Mammary epithelial cell (primary cell): ENCODE measurements at regions of chr9 and their contacts with region 1.

Region 1: DNA sequence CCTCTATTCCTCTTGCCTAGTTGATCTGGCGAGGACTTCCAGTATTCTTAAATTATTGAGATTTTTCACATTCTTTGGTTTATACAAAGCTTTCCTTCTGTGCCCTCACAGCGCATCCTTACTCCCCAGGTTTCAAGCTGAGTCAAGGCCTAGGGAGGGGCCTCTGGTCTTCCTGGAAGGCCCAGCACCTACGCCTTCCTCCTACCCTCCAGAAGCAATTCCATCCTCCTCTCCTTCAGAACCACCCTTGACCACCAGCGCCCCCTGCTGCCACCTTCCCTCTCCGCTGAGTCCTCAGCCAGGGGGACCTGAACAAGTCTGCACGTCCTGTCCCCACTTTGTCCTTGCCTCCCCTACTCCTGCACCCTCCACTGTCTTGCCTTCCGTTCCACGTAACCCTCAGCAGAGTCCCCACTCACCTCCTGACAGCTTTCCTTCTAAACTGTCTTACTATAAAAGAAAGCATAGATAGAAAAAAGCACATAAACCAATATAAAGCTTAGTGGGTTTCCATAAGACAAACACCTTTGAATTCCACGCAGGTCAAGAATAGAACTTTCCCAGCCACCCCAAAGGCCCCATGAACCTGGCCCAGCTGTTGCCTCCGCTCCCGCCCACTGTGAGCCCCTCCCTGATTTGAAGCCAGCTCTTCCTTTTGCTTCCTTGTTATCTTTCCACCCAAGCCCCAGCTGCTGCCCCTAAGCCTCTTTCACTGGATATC is 63.0 kb upstream of the CTSL start:
- DNase-seq: peak; percentile 78
- H3K4me3 ChIP-seq: no peak overlapping the region
- H3K27ac ChIP-seq: no peak overlapping the region
- H3K4me1 ChIP-seq: no peaks in the 10 kb centered on the region
- H3K27me3 ChIP-seq: no peaks in the 10 kb centered on the region
- CTCF ChIP-seq: peak; percentile 84 to 92

Region 2: DNA sequence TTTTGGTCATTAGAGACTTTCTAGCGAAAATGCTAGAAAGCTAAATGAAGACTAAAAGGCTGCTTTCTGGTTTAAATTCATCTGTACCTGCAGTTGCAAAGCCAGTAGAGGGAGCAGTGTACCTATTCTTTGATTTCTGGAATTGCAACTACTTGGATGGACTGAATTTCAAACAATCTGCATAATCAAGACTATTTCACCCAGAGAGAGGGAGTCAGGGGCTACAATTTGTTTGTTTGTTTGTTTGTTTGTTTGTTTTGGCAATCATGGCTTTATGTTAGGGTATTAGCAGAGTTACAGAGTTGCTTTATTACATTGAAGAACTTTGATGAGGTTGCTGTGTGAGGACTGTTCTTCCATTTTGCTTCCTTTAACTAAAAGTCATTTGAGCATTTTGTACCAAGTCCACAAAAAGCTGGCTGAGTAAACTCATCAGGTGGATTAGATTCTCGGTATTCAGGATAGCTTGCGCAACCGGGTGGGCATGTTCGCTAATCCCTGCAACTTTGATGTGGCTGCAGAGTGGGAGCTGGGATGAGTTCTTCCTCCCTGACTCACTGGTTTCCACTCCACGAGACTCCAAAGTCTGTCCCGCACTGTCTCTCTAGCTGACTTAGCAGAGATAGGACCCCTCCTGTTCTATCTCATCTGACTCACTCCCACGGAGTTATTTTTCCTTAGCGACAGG is 1228.8 kb before region 1 on chr9:
- CTCF ChIA-PET with region 1: no interaction called
- dilution Hi-C with region 1: no loop called
- in situ Hi-C with region 1: loop called in 1 of 2 experiments (anchors 25 kb)
- intact Hi-C with region 1: loop called (anchors 5 kb)
- DNase-seq: peak; percentile 35
- H3K4me3 ChIP-seq: no peak overlapping the region
- H3K27ac ChIP-seq: no peak overlapping the region
- H3K4me1 ChIP-seq: peaks cover 8% of the 10 kb centered on the region
- H3K27me3 ChIP-seq: no peaks in the 10 kb centered on the region
- CTCF ChIP-seq: peak; percentile 82 to 84

Region 3: DNA sequence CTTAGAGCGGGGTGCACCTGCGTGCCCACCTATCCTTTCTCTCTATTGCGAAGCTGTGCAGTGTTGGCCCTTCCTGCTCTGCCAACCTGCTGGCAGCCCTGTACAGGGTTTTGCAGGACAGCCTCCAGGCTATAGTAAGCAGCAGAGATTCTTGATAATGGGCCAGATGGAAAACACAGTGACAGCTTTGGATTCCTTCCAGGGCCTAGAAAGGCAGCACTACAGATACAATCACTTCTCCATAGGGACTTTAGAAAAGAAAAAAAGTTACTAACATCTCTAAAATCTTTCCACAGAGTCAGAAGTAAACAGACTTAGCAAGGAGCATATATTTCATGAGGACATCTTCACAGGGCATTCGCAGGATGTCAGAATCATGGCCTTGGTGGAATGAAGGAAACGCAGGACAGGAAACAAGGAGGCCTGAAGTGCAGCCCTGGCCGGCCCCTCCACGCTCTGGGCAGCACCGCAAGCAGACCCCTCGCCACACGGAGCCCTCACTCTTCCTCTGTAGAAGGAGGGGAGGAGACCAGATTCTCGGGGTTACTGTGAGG is 543.6 kb before region 1 on chr9:
- CTCF ChIA-PET with region 1: no interaction called
- dilution Hi-C with region 1: no loop called
- in situ Hi-C with region 1: loop called in 1 of 2 experiments (anchors 25 kb)
- intact Hi-C with region 1: no loop called
- DNase-seq: peak; percentile 61
- H3K4me3 ChIP-seq: no peak overlapping the region
- H3K27ac ChIP-seq: no peak overlapping the region
- H3K4me1 ChIP-seq: peaks cover 26% of the 10 kb centered on the region
- H3K27me3 ChIP-seq: no peaks in the 10 kb centered on the region
- CTCF ChIP-seq: no peak

Region 4: DNA sequence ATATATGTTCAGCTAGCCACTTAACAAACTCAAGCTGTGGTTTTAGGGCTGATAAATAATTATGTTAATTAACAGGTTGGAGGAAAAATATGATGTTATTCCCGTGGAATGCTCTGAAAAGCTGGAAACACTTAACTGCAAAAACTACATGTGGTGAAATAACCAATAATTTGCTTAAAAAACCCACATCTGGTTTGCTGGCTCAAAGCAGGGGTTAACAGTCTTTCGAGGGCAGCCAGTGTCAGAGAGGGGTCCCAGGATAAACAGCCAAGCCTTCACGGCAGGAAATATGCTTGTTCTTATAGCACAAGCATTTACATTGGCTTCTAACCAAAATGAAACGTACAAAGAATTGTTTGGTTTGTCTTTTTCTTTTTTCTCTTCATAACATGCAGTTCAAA is 461.6 kb before region 1 on chr9:
- CTCF ChIA-PET with region 1: no interaction called
- dilution Hi-C with region 1: no loop called
- in situ Hi-C with region 1: no loop called
- intact Hi-C with region 1: no loop called
- DNase-seq: no peak
- H3K4me3 ChIP-seq: no peak overlapping the region
- H3K27ac ChIP-seq: no peak overlapping the region
- H3K4me1 ChIP-seq: peaks cover 16% of the 10 kb centered on the region
- H3K27me3 ChIP-seq: no peaks in the 10 kb centered on the region
- CTCF ChIP-seq: no peak

Region 5: DNA sequence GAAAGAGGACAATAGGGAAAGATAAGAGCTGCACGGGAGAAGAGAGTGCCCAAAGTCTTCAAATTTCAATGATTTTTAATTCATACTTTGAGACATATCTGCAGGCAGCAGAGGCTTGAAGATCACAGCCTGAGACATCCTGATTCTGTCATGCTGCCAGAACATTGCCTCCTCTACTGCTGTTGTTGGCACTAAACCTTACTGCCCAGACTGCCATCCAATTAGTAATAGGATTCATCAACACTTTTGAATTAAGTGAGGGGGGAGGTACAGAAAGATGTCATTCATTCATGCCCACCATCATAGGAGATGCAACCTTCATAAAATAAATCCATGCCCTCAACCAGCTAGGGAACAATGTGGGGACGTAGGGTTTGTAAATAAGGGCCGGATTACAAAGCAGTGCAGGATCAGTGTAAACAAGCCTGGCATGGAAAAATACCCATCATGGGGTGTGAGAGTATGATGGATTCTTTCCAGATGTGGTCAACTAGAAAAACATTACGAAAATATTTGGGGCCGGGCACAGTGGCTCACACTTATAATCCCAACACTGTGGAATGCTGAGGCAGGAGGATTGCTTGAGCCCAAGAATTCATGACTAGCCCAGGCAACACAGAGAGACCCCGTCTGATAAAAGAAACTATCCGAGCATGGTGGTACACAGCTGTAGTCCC is 287.4 kb before region 1 on chr9:
- CTCF ChIA-PET with region 1: interaction called, 5 read pairs
- dilution Hi-C with region 1: no loop called
- in situ Hi-C with region 1: no loop called
- intact Hi-C with region 1: loop called (anchors 1 kb)
- DNase-seq: peak; percentile 84
- H3K4me3 ChIP-seq: no peak overlapping the region
- H3K27ac ChIP-seq: peak overlapping the region; percentile 62
- H3K4me1 ChIP-seq: peaks cover 32% of the 10 kb centered on the region
- H3K27me3 ChIP-seq: no peaks in the 10 kb centered on the region
- CTCF ChIP-seq: no peak

Region 6: DNA sequence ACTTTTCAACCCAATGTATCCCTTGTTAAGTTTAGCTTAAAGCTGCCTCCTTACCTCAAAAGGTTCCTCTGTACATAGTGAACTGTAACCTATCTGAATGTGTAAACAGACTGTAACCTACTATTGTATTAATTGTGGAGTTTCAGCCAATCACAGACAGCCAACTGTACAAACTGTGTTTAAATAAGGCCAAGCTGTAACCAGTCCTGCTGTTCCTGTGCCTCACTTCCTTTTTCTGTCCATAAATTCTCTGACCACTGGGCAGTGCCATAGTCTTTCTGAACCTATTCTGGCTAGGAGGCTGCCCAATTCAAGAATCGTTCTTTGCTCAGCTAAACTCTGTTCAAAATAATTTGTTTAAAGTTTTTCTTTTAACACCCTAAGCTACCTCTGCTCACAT is 240.0 kb before region 1 on chr9:
- CTCF ChIA-PET with region 1: interaction called, 3 read pairs
- dilution Hi-C with region 1: no loop called
- in situ Hi-C with region 1: no loop called
- intact Hi-C with region 1: loop called (anchors 2 kb)
- DNase-seq: no peak
- H3K4me3 ChIP-seq: no peak overlapping the region
- H3K27ac ChIP-seq: no peak overlapping the region
- H3K4me1 ChIP-seq: peaks cover 7% of the 10 kb centered on the region
- H3K27me3 ChIP-seq: no peaks in the 10 kb centered on the region
- CTCF ChIP-seq: no peak

Region 7: DNA sequence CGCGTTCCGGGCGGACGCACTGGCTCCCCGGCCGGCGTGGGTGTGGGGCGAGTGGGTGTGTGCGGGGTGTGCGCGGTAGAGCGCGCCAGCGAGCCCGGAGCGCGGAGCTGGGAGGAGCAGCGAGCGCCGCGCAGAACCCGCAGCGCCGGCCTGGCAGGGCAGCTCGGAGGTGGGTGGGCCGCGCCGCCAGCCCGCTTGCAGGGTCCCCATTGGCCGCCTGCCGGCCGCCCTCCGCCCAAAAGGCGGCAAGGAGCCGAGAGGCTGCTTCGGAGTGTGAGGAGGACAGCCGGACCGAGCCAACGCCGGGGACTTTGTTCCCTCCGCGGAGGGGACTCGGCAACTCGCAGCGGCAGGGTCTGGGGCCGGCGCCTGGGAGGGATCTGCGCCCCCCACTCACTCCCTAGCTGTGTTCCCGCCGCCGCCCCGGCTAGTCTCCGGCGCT is 165.3 kb before region 1 on chr9 and contains the start of gene DAPK1:
- CTCF ChIA-PET with region 1: no interaction called
- dilution Hi-C with region 1: no loop called
- in situ Hi-C with region 1: no loop called
- intact Hi-C with region 1: loop called (anchors 1 kb)
- DNase-seq: peak; percentile 44
- H3K4me3 ChIP-seq: peak within 1 kb of the TSS; percentile 57 to 77 (median 69)
- H3K27ac ChIP-seq: no peak within 1 kb of the TSS
- H3K4me1 ChIP-seq: peaks cover 18% of the 10 kb centered on the region
- H3K27me3 ChIP-seq: peaks cover 7% of the 10 kb centered on the region
- CTCF ChIP-seq: no peak
- total RNA-seq, gene DAPK1: 17.1 to 33.3 TPM

Region 8: DNA sequence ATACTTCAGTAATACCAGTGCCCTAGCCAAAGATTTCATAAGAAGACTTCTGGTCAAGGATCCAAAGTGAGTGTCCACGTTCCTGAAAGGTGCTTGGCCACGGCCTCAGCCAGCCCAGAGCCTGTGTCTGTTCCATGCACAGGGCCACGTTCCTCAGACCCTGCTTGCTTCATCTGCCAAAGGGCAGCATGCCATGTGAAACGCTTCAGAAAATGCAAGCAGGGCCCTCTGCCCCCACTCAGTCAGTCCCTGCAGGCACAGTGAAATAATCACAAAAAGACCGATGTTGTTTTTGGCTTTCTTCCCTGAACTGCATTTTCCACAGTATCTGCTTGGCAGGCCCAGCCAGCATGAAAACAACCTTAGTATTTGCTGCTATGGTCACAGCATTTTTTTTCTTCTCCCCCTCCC is 22.6 kb before region 1 on chr9:
- CTCF ChIA-PET with region 1: no interaction called
- dilution Hi-C with region 1: no loop called
- in situ Hi-C with region 1: no loop called
- intact Hi-C with region 1: no loop called
- DNase-seq: no peak
- H3K4me3 ChIP-seq: no peak overlapping the region
- H3K27ac ChIP-seq: no peak overlapping the region
- H3K4me1 ChIP-seq: no peaks in the 10 kb centered on the region
- H3K27me3 ChIP-seq: no peaks in the 10 kb centered on the region
- CTCF ChIP-seq: no peak

Region 9: DNA sequence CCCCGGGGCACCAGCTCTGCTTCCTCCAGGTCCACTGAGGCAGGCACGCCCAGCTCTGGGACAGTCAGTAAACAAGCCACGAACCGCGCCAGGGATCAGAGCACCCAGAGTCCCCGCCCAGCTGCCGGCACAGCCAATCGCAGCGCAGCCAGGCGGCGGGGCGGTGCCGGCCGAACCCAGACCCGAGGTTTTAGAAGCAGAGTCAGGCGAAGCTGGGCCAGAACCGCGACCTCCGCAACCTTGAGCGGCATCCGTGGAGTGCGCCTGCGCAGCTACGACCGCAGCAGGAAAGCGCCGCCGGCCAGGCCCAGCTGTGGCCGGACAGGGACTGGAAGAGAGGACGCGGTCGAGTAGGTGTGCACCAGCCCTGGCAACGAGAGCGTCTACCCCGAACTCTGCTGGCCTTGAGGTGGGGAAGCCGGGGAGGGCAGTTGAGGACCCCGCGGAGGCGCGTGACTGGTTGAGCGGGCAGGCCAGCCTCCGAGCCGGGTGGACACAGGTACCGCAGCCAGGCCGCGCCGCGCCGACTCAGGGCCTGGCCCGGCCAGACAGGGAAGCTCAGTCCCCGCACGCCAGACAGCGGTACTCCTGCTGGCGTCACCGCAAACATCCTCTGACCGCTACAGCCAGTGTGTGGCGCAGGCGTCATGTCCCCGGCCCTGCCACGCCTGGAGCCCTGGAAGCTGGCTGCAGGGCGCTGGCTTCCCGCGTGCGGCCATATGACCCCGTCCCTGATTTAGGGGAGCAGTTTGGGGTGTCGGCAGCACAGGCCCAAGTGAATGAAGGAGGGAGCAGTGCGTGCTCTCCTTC is 63.1 kb after region 1 on chr9 and contains the start of gene CTSL:
- CTCF ChIA-PET with region 1: no interaction called
- dilution Hi-C with region 1: no loop called
- in situ Hi-C with region 1: no loop called
- intact Hi-C with region 1: no loop called
- DNase-seq: peak; percentile 70
- H3K4me3 ChIP-seq: peak within 1 kb of the TSS; percentile 48 to 78 (median 70)
- H3K27ac ChIP-seq: peak within 1 kb of the TSS; percentile 58
- H3K4me1 ChIP-seq: no peaks in the 10 kb centered on the region
- H3K27me3 ChIP-seq: no peaks in the 10 kb centered on the region
- CTCF ChIP-seq: peak in 1 of 2 donors; percentile 49
- total RNA-seq, gene CTSL: 38.8 to 109 TPM